IMR-90 (cell line): ENCODE measurements at regions of chr11 and their contacts with region 1.

Region 1: GRCh38 chr11:114295676-114296604 is at the start of gene NNMT:
- DNase-seq: peak; percentile 97
- ATAC-seq: peak; percentile 73
- H3K4me3 ChIP-seq: peak within 1 kb of the TSS; percentile 62
- H3K27ac ChIP-seq: peak within 1 kb of the TSS; percentile 98
- H3K4me1 ChIP-seq: peaks cover 18% of the 10 kb centered on the region
- H3K27me3 ChIP-seq: no peaks in the 10 kb centered on the region
- CTCF ChIP-seq: 0 out of 2 replicates have a peak, but pooled peaks have one; percentile 2
- POLR2A ChIP-seq: peak; percentile 85
- RAD21 ChIP-seq: no peak; the same call in none of the 2 replicates
- total RNA-seq, gene NNMT: 74.7 and 108 TPM in 2 replicates

Region 2: DNA sequence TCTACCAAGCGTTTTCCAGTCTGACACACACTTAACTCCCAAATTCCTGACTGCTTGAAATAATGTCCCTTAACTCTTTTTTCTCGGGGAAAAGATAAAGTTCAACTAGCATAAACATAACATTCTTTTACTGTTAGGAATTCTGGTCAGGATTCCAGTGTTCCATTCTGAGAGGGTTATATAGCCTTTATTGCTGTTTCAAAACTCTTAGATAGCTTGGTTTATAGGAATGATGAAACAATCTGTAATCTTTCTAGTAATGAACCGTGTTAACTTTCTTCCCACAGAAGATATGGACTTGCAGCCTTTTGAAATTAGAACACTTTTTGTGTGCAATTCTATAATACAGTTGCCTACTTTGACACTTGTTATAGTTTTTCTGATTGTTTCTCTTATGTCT is 152.0 kb after region 1 on chr11:
- CTCF ChIA-PET with region 1: no interaction called
- POLR2A ChIA-PET with region 1: no interaction called
- dilution Hi-C with region 1: no loop called
- in situ Hi-C with region 1: no loop called
- intact Hi-C with region 1: loop called (anchors 5 kb)
- DNase-seq: peak; percentile 85
- ATAC-seq: peak; percentile 90
- H3K4me3 ChIP-seq: no peak overlapping the region; the same call in 1 of the 2 replicates
- H3K27ac ChIP-seq: peak overlapping the region; percentile 93; the same call in 1 of the 2 replicates
- H3K4me1 ChIP-seq: peaks cover 16% of the 10 kb centered on the region
- H3K27me3 ChIP-seq: no peaks in the 10 kb centered on the region
- CTCF ChIP-seq: no peak
- POLR2A ChIP-seq: no peak
- RAD21 ChIP-seq: no peak

Region 3: GRCh38 chr11:114762408-114762807 is 466.5 kb after region 1 on chr11:
- CTCF ChIA-PET with region 1: no interaction called
- POLR2A ChIA-PET with region 1: no interaction called
- dilution Hi-C with region 1: no loop called
- in situ Hi-C with region 1: no loop called
- intact Hi-C with region 1: no loop called
- DNase-seq: peak; percentile 54
- ATAC-seq: peak; percentile 91
- H3K4me3 ChIP-seq: no peak overlapping the region
- H3K27ac ChIP-seq: no peak overlapping the region
- H3K4me1 ChIP-seq: no peaks in the 10 kb centered on the region
- H3K27me3 ChIP-seq: no peaks in the 10 kb centered on the region
- CTCF ChIP-seq: peak; percentile 78
- POLR2A ChIP-seq: no peak
- RAD21 ChIP-seq: peak; percentile 80

Region 4: GRCh38 chr11:115126515-115127208 is 830.7 kb after region 1 on chr11:
- CTCF ChIA-PET with region 1: no interaction called
- POLR2A ChIA-PET with region 1: no interaction called
- dilution Hi-C with region 1: no loop called
- in situ Hi-C with region 1: no loop called
- intact Hi-C with region 1: no loop called
- DNase-seq: no peak
- ATAC-seq: no peak
- H3K4me3 ChIP-seq: no peak overlapping the region
- H3K27ac ChIP-seq: no peak overlapping the region
- H3K4me1 ChIP-seq: no peaks in the 10 kb centered on the region
- H3K27me3 ChIP-seq: peaks cover 6% of the 10 kb centered on the region; the same call in 1 of the 2 replicates
- CTCF ChIP-seq: no peak
- POLR2A ChIP-seq: no peak
- RAD21 ChIP-seq: no peak